Naive thymus-derived CD4-positive, alpha-beta T cell (primary cell): ENCODE measurements at regions of chr16 and their contacts with region 1.

Region 1: DNA sequence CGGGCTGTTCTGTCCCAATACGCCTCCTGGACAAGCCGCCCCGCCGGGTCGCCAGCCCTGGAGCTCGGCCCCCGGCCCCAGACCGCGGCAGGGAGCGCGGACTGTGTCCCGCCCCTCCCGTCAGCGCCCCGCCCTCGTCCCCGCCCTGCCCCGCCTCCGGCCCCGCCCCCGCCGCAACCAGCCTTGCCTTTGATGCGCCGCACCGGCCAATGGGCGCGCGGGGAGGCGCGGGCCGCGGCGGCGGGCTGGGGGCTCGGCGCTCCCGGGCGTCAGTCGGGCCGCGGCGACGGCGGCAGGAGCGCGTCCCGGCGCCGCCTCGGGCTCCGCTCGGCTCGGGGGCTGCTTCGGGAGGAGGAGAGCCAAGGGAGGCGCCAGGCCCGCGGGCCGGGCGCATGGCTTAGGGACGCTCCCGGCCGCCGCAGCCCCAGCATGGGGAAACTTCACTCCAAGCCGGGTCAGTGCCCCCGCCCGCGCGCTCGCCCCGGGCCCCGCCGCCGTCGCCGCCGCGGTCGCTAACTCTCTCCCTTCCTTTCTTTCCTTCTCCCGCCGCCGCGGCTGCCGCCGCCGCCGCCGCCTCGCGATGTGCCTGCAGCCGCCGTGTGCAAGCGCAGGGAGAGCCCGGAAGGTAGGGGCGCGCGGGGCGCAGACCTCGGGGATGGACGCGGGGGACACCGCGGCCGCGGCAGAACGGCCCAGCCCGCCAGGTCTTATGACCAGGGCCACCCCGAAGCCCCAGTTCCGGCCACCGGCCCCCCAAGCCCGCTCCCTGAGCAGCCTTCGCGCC is at the start of gene NKD1:
- DNase-seq: peak; percentile 60 to 85 (median 71)
- ATAC-seq: peak; percentile 86
- H3K4me3 ChIP-seq: peak within 1 kb of the TSS; percentile 67
- H3K4me3 Mint-ChIP-seq: peak within 1 kb of the TSS; percentile 85 to 95 (median 88)
- H3K27ac ChIP-seq: peak within 1 kb of the TSS; percentile 72
- H3K27ac Mint-ChIP-seq: peak within 1 kb of the TSS; percentile 72 to 97 (median 91)
- H3K4me1 ChIP-seq: peaks cover 9 to 26% of the 10 kb centered on the region in 2 donors
- H3K4me1 Mint-ChIP-seq: peaks cover 14 to 63% (median 43%) of the 10 kb centered on the region in 7 donors
- H3K27me3 ChIP-seq: no peaks in the 10 kb centered on the region
- H3K27me3 Mint-ChIP-seq: peaks cover 0 to 76% (median 0%) of the 10 kb centered on the region in 5 donors
- total RNA-seq, gene NKD1: 1.4 to 7.9 (median 6.2) TPM

Region 2: DNA sequence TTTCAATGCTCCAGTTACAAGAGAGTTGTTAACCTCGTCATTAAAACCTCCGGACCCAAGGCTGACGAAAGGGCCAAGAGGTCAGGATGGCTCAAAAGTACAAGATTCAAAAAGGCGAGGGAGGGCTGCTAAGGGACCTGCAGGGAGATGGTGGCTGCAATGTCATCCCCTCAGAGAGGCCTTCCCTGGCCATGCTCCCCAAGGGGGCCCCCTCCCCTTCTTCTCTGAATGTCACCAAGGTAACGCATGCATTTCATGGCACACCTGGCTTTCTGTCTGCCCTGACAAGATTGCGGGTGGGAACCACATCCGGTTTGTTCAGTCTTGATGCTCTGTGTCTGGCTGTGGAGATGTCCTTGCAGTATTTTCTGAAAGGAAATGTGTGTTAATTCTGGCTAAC is 1084.8 kb before region 1 on chr16:
- CTCF ChIA-PET with region 1: no interaction called
- POLR2A ChIA-PET with region 1: no interaction called
- intact Hi-C with region 1: loop called in 1 of 2 experiments (anchors 5 kb)
- DNase-seq: peak; percentile 18 to 94 (median 89)
- ATAC-seq: peak; percentile 86
- H3K4me3 ChIP-seq: peak overlapping the region; percentile 15
- H3K4me3 Mint-ChIP-seq: peak overlapping the region; percentile 64 to 90 (median 79)
- H3K27ac ChIP-seq: peak overlapping the region; percentile 70
- H3K27ac Mint-ChIP-seq: peak overlapping the region; percentile 77 to 99 (median 95)
- H3K4me1 ChIP-seq: peaks cover 27 to 49% of the 10 kb centered on the region in 2 donors
- H3K4me1 Mint-ChIP-seq: peaks cover 12 to 80% (median 67%) of the 10 kb centered on the region in 7 donors
- H3K27me3 ChIP-seq: no peaks in the 10 kb centered on the region
- H3K27me3 Mint-ChIP-seq: peaks cover 0 to 17% (median 0%) of the 10 kb centered on the region in 5 donors

Region 3: GRCh38 chr16:50152807-50153452 is 395.4 kb before region 1 on chr16 and contains the start of gene TENT4B:
- CTCF ChIA-PET with region 1: no interaction called
- POLR2A ChIA-PET with region 1: no interaction called
- intact Hi-C with region 1: loop called (anchors 1 kb)
- DNase-seq: peak; percentile 87 to 97 (median 96)
- ATAC-seq: peak; percentile 88
- H3K4me3 ChIP-seq: peak within 1 kb of the TSS; percentile 87
- H3K4me3 Mint-ChIP-seq: peak within 1 kb of the TSS; percentile 87 to 99 (median 94)
- H3K27ac ChIP-seq: peak within 1 kb of the TSS; percentile 99
- H3K27ac Mint-ChIP-seq: peak within 1 kb of the TSS; percentile 93 to 99 (median 97)
- H3K4me1 ChIP-seq: peaks cover 16 to 30% of the 10 kb centered on the region in 2 donors
- H3K4me1 Mint-ChIP-seq: peaks cover 28 to 44% (median 40%) of the 10 kb centered on the region in 7 donors
- H3K27me3 ChIP-seq: no peaks in the 10 kb centered on the region
- H3K27me3 Mint-ChIP-seq: no peaks in the 10 kb centered on the region
- total RNA-seq, gene TENT4B: 18.8 to 25.9 (median 23.8) TPM

Region 4: GRCh38 chr16:50326949-50327402 is 221.3 kb before region 1 on chr16:
- CTCF ChIA-PET with region 1: no interaction called
- POLR2A ChIA-PET with region 1: no interaction called
- intact Hi-C with region 1: loop called in 1 of 2 experiments (anchors 5 kb)
- DNase-seq: peak in 8 of 9 donors; percentile 53 to 89 (median 78)
- ATAC-seq: peak; percentile 97
- H3K4me3 ChIP-seq: no peak overlapping the region
- H3K4me3 Mint-ChIP-seq: peak overlapping the region in 8 of 10 donors; percentile 8 to 57 (median 26)
- H3K27ac ChIP-seq: peak overlapping the region; percentile 44
- H3K27ac Mint-ChIP-seq: peak overlapping the region; percentile 54 to 94 (median 81)
- H3K4me1 ChIP-seq: peaks cover 10 to 34% of the 10 kb centered on the region in 2 donors
- H3K4me1 Mint-ChIP-seq: peaks cover 37 to 62% (median 49%) of the 10 kb centered on the region in 7 donors
- H3K27me3 ChIP-seq: no peaks in the 10 kb centered on the region
- H3K27me3 Mint-ChIP-seq: no peaks in the 10 kb centered on the region

Region 5: GRCh38 chr16:50585331-50585776 is 37.0 kb after region 1 on chr16:
- CTCF ChIA-PET with region 1: no interaction called
- POLR2A ChIA-PET with region 1: interaction called, 3 read pairs
- intact Hi-C with region 1: loop called (anchors 1 to 5 kb)
- DNase-seq: no peak
- ATAC-seq: no peak
- H3K4me3 ChIP-seq: no peak overlapping the region
- H3K4me3 Mint-ChIP-seq: no peak overlapping the region
- H3K27ac ChIP-seq: no peak overlapping the region
- H3K27ac Mint-ChIP-seq: no peak overlapping the region
- H3K4me1 ChIP-seq: peaks cover 0 to 32% of the 10 kb centered on the region in 2 donors
- H3K4me1 Mint-ChIP-seq: peaks cover 20 to 54% (median 39%) of the 10 kb centered on the region in 7 donors
- H3K27me3 ChIP-seq: no peaks in the 10 kb centered on the region
- H3K27me3 Mint-ChIP-seq: no peaks in the 10 kb centered on the region

Region 6: GRCh38 chr16:50627419-50627818 is 79.1 kb after region 1 on chr16:
- CTCF ChIA-PET with region 1: interaction called, 3 read pairs
- POLR2A ChIA-PET with region 1: interaction called, 3 read pairs
- intact Hi-C with region 1: loop called in 1 of 2 experiments (anchors 1 kb)
- DNase-seq: peak in 7 of 9 donors; percentile 29 to 67 (median 57)
- ATAC-seq: peak; percentile 78
- H3K4me3 ChIP-seq: peak overlapping the region; percentile 29
- H3K4me3 Mint-ChIP-seq: peak overlapping the region; percentile 68 to 90 (median 84)
- H3K27ac ChIP-seq: peak overlapping the region; percentile 43
- H3K27ac Mint-ChIP-seq: peak overlapping the region; percentile 71 to 95 (median 88)
- H3K4me1 ChIP-seq: peaks cover 0 to 45% of the 10 kb centered on the region in 2 donors
- H3K4me1 Mint-ChIP-seq: peaks cover 29 to 50% (median 44%) of the 10 kb centered on the region in 7 donors
- H3K27me3 ChIP-seq: no peaks in the 10 kb centered on the region
- H3K27me3 Mint-ChIP-seq: no peaks in the 10 kb centered on the region

Region 7: GRCh38 chr16:50741808-50742575 is 193.7 kb after region 1 on chr16 and contains the start of gene CYLD:
- CTCF ChIA-PET with region 1: no interaction called
- POLR2A ChIA-PET with region 1: interaction called, 4 read pairs
- intact Hi-C with region 1: loop called (anchors 1 kb)
- DNase-seq: peak; percentile 95 to 100 (median 100)
- ATAC-seq: peak; percentile 94
- H3K4me3 ChIP-seq: peak within 1 kb of the TSS; percentile 70
- H3K4me3 Mint-ChIP-seq: peak within 1 kb of the TSS; percentile 90 to 100 (median 96)
- H3K27ac ChIP-seq: peak within 1 kb of the TSS; percentile 100
- H3K27ac Mint-ChIP-seq: peak within 1 kb of the TSS; percentile 94 to 99 (median 98)
- H3K4me1 ChIP-seq: peaks cover 7 to 38% of the 10 kb centered on the region in 2 donors
- H3K4me1 Mint-ChIP-seq: peaks cover 28 to 52% (median 40%) of the 10 kb centered on the region in 7 donors
- H3K27me3 ChIP-seq: no peaks in the 10 kb centered on the region
- H3K27me3 Mint-ChIP-seq: no peaks in the 10 kb centered on the region
- total RNA-seq, gene CYLD: 259 to 393 (median 336) TPM